ENCODE measurements at regions of chr18 and their contacts with region 1.

Region 1: GRCh38 chr18:50819728-50820378 is at the start of gene MRO:
- DNase-seq: peak; percentile 83 to 94 (median 86)
- H3K4me3 ChIP-seq: peak within 1 kb of the TSS; percentile 27 to 75 (median 55)
- H3K27ac ChIP-seq: peak within 1 kb of the TSS in 58 of 59 donors; percentile 3 to 91 (median 74)
- H3K27me3 ChIP-seq: no peaks in the 10 kb centered on the region
- CTCF ChIP-seq: peak; percentile 84 to 99 (median 91)
- total RNA-seq, gene MRO: 18.3 to 117 (median 41.7) TPM

Region 2: DNA sequence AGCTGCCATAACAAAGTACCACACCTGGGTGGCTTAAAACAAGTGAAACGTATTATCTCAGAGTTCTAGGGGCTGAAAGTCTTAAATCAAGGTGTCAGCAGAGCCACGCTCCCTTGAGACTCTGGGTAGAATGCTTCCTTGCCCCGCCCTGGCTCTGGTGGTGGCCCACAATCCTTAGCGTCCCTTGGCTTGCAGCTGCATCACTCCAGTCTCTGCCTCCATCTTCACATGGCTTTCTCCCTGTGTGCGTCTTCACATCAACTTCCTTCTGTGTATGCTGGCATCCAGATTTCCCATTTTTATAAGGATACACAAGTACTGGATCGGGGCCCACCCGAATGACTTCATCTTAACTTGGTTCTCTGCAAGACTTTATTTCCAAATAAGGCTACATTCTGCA is 62.5 kb before region 1 on chr18:
- intact Hi-C with region 1: no loop called
- DNase-seq: no peak
- H3K4me3 ChIP-seq: no peak overlapping the region
- H3K27ac ChIP-seq: no peak overlapping the region
- H3K27me3 ChIP-seq: peaks cover 0 to 10% (median 0%) of the 10 kb centered on the region in 45 donors
- CTCF ChIP-seq: no peak

Region 3: DNA sequence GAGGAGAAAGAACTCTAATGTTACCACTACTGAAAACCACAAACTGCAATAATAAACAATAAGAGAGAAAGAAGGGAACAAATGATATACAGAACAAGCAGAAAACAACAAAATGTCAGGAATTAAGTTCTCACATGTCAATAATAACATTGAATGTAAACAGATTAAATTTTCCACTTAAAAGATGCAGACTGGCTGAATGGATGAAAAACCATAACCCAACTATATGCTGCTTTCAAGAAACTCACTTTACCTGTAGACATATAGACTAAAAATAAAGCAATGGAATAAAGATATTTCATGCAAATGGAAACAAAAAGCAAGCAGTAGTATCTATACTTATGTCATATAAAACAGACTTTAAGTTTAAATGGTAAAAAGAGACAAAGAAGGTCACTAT is 50.4 kb before region 1 on chr18:
- intact Hi-C with region 1: no loop called
- DNase-seq: no peak
- H3K4me3 ChIP-seq: no peak overlapping the region
- H3K27ac ChIP-seq: no peak overlapping the region
- H3K27me3 ChIP-seq: no peaks in the 10 kb centered on the region
- CTCF ChIP-seq: no peak

Region 4: GRCh38 chr18:51029694-51030536 is 210.1 kb after region 1 on chr18 and contains the start of gene SMAD4:
- intact Hi-C with region 1: loop called in 1 of 2 experiments (anchors 5 kb)
- DNase-seq: peak; percentile 90 to 97 (median 94)
- H3K4me3 ChIP-seq: peak within 1 kb of the TSS; percentile 58 to 96 (median 83)
- H3K27ac ChIP-seq: peak within 1 kb of the TSS; percentile 85 to 100 (median 96)
- H3K27me3 ChIP-seq: no peaks in the 10 kb centered on the region
- CTCF ChIP-seq: peak in 31 of 56 donors; percentile 2 to 55 (median 29)
- total RNA-seq, gene SMAD4: 64.8 to 122 (median 86.8) TPM

Region 5: GRCh38 chr18:51051105-51051712 is 231.4 kb after region 1 on chr18:
- intact Hi-C with region 1: loop called (anchors 1 to 5 kb)
- DNase-seq: no peak
- H3K4me3 ChIP-seq: no peak overlapping the region
- H3K27ac ChIP-seq: no peak overlapping the region
- H3K27me3 ChIP-seq: no peaks in the 10 kb centered on the region
- CTCF ChIP-seq: peak; percentile 63 to 86 (median 77)

Region 6: DNA sequence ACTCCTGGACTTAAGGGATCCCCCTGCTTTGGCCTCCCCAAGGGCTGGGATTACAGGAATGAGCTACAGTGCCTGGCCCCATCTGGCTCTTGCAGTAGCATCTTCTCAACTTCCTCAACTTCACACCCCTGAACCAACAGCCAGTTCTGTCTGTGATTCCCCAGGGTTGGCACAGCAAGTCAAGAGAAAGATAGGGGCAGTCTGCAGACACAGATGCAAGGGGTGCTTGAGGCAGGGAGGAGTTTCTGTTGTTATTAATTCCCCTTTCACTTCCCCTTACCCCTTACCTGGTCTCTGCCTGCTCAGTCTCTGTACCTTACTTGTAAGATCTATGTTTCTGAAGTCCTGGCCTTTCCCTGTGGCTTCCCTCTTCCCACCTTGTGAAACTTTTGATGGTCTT is 431.8 kb after region 1 on chr18:
- intact Hi-C with region 1: no loop called
- DNase-seq: no peak
- H3K4me3 ChIP-seq: no peak overlapping the region
- H3K27ac ChIP-seq: no peak overlapping the region
- H3K27me3 ChIP-seq: peaks cover 0 to 6% (median 0%) of the 10 kb centered on the region in 45 donors
- CTCF ChIP-seq: no peak